Mammary epithelial cell (primary cell): ENCODE measurements at regions of chr11 and their contacts with region 1.

Region 1: DNA sequence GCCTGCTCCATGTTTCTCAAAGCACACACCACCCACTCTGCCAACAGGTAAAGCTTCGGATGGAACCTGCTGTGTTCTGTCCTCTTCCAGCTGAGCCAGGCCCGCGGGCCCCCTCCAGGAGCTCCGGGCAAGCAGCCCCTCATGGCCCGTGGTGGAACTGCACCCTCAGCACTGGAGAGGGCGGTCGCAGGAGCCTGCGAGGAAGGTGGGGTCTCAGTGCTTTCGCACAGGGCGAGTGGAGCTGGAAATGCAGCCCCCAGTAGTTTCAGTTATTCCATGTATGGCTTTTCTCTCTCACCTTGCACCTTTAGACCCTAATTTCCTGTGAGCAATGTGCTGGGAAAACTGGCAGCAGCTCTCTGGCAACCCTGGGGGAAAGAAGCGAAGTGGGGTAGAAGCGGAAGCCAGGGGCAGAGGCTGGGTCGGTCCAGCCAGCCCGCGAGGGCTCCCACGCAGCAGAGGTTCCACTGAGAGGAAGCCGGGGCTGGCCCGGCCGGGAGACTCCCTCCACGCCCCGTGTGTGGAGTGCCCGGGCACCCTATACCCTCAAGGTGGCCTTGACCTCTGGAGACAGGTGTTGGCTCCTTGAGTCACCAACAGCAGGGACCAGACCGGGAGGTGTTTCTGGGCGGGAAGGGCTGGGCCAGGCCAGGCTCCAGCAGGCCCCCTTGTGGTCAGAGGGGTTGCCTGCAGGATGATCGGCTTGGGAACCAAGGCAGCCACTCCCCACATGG is 119.9 kb upstream of the TMEM45B start:
- DNase-seq: peak; percentile 37
- H3K4me3 ChIP-seq: no peak overlapping the region
- H3K27ac ChIP-seq: no peak overlapping the region
- H3K4me1 ChIP-seq: no peaks in the 10 kb centered on the region
- H3K27me3 ChIP-seq: peaks cover 2% of the 10 kb centered on the region
- CTCF ChIP-seq: peak; percentile 55 to 82

Region 2: DNA sequence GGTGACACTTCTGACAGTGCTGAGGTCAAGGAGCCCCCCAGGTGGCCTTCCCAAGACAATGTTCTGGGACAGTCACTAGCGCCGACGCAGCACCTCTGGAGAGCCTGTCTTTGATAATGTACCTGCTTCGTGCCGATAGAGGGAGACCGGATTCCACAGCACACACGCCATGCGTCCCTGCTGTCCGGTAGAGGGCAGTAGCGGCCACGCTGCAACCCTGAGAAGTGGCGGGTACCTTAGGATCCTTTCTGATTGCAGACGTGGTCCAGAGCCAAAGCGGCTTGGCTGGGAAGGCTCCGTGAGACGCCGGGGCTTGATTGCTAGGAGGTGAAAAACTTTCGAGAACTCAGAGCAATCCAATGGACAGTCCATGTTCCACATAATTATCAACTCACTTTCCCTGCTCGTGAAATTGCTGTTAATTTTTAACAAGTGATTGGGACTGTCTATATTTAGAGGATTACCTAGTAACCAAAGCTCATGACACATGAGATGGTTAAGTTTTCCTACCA is 331.5 kb before region 1 on chr11:
- CTCF ChIA-PET with region 1: interaction called, 6 read pairs
- dilution Hi-C with region 1: no loop called
- in situ Hi-C with region 1: no loop called
- intact Hi-C with region 1: loop called (anchors 1 kb)
- DNase-seq: peak; percentile 82
- H3K4me3 ChIP-seq: no peak overlapping the region
- H3K27ac ChIP-seq: no peak overlapping the region
- H3K4me1 ChIP-seq: peaks cover 4% of the 10 kb centered on the region
- H3K27me3 ChIP-seq: peaks cover 21% of the 10 kb centered on the region
- CTCF ChIP-seq: peak; percentile 100

Region 3: DNA sequence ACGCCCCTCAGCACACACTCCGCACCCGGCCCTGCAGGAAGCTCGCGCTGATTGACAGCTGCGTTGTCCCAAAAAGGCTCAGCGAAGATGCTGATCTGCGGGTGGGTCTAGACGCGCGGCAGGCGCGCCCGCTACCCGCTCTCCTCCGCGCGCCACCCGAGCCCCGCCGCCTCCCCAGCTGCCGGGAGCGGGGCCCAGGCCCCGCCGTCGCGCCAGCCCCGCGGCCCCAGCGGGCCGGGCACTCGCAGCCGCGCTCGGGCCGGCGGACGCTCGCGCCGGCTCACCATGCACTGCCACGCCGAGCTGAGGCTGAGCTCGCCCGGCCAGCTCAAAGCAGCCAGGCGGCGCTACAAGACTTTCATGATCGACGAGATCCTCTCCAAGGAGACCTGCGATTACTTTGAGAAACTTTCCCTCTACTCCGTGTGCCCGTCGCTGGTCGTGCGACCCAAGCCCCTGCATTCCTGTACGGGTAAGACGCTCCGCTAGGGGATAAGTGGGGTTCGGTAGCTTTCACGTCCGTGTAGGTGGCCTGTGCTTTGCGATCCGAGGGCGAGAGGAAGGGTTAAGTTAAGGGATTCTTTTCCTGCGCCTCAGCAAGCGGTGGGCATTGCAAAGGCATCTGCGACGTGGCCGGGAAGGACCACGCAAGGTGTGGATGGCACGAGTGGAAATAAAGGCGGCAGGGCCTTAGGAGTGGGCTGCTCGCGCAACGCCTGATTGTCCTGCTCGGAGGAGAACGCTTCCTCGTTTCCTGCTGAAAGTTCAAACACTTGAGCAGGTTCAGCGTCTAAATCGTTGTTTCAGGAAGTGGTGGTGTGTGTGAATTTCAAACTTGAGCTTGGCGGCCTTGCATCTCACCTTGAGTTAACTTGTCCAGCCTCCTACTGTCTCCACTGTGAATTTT is 319.7 kb before region 1 on chr11 and contains the start of gene BARX2:
- CTCF ChIA-PET with region 1: interaction called, 3 read pairs
- dilution Hi-C with region 1: no loop called
- in situ Hi-C with region 1: loop called in 1 of 2 experiments (anchors 5 kb)
- intact Hi-C with region 1: loop called (anchors 1 kb)
- DNase-seq: peak; percentile 64
- H3K4me3 ChIP-seq: peak within 1 kb of the TSS in 2 of 3 experiments; percentile 25 to 41
- H3K27ac ChIP-seq: no peak within 1 kb of the TSS
- H3K4me1 ChIP-seq: peaks cover 18% of the 10 kb centered on the region
- H3K27me3 ChIP-seq: peaks cover 66% of the 10 kb centered on the region
- CTCF ChIP-seq: peak; percentile 37 to 83
- total RNA-seq, gene BARX2: 0.17 TPM in 1 of 2 donors, not detected in the other

Region 4: GRCh38 chr11:129410395-129410960 is 285.3 kb before region 1 on chr11:
- CTCF ChIA-PET with region 1: no interaction called
- dilution Hi-C with region 1: no loop called
- in situ Hi-C with region 1: no loop called
- intact Hi-C with region 1: loop called (anchors 1 kb)
- DNase-seq: peak; percentile 27
- H3K4me3 ChIP-seq: no peak overlapping the region
- H3K27ac ChIP-seq: no peak overlapping the region
- H3K4me1 ChIP-seq: no peaks in the 10 kb centered on the region
- H3K27me3 ChIP-seq: peaks cover 9% of the 10 kb centered on the region
- CTCF ChIP-seq: peak in 1 of 2 donors; percentile 53

Region 5: GRCh38 chr11:129557421-129557820 is 138.3 kb before region 1 on chr11:
- CTCF ChIA-PET with region 1: no interaction called
- dilution Hi-C with region 1: no loop called
- in situ Hi-C with region 1: no loop called
- intact Hi-C with region 1: no loop called
- DNase-seq: no peak
- H3K4me3 ChIP-seq: no peak overlapping the region
- H3K27ac ChIP-seq: no peak overlapping the region
- H3K4me1 ChIP-seq: no peaks in the 10 kb centered on the region
- H3K27me3 ChIP-seq: peaks cover 3% of the 10 kb centered on the region
- CTCF ChIP-seq: no peak

Region 6: DNA sequence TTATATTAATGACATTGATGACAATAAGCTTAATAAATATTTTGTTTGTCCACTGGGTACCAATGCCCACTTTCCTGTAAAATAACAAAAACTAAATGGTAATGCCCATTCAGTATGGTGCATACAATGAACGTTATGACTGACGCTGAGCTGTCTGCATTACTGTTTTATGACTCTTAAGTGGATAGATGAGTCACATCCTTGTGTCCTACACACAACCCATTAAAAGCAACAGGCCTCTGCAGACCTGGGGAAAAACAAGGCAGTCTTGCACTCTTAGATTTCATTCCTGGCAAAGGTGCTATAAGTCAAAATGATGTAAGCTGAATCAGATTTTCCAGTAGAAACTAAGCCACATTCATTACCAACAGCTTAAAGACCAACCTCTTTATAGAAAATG is 56.4 kb before region 1 on chr11:
- CTCF ChIA-PET with region 1: no interaction called
- dilution Hi-C with region 1: no loop called
- in situ Hi-C with region 1: no loop called
- intact Hi-C with region 1: loop called (anchors 2 kb)
- DNase-seq: peak; percentile 99
- H3K4me3 ChIP-seq: no peak overlapping the region
- H3K27ac ChIP-seq: peak overlapping the region; percentile 95
- H3K4me1 ChIP-seq: peaks cover 76% of the 10 kb centered on the region
- H3K27me3 ChIP-seq: no peaks in the 10 kb centered on the region
- CTCF ChIP-seq: no peak

Region 7: DNA sequence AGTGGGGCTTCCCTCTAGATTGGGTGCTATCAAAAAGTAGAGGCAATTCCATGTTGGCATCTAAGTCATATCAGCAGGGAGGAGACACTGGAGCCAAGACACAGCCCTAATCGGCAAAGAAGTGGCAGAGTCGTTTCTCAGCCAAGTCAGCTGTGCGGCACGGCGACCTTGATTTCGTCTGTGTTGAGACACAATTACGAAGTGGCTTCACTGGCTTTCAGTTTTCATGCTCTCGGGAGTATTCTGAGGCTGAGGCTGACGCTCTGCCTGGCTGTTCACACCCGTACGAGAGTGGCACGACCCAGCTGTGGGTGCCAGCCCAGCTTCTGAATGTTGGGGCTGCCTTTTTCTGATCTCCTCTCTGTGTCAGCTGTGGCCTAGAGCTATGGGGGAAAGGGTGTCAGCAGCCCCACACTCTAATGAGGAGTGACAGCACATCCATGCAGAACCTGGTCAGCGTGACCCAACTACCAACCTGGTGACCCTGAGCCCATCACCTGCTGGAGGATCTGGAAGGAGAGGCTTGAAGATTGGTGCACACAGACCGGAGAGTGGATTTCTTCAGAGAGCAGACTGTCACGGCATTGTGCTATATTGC is 14.2 kb after region 1 on chr11:
- CTCF ChIA-PET with region 1: no interaction called
- dilution Hi-C with region 1: no loop called
- in situ Hi-C with region 1: no loop called
- intact Hi-C with region 1: no loop called
- DNase-seq: no peak
- H3K4me3 ChIP-seq: no peak overlapping the region
- H3K27ac ChIP-seq: no peak overlapping the region
- H3K4me1 ChIP-seq: no peaks in the 10 kb centered on the region
- H3K27me3 ChIP-seq: no peaks in the 10 kb centered on the region
- CTCF ChIP-seq: no peak

Region 8: GRCh38 chr11:129803533-129803932 is 107.8 kb after region 1 on chr11:
- CTCF ChIA-PET with region 1: no interaction called
- dilution Hi-C with region 1: no loop called
- in situ Hi-C with region 1: no loop called
- intact Hi-C with region 1: no loop called
- DNase-seq: no peak
- H3K4me3 ChIP-seq: no peak overlapping the region
- H3K27ac ChIP-seq: no peak overlapping the region
- H3K4me1 ChIP-seq: peaks cover 3% of the 10 kb centered on the region
- H3K27me3 ChIP-seq: no peaks in the 10 kb centered on the region
- CTCF ChIP-seq: no peak

Region 9: GRCh38 chr11:130076778-130077481 is 381.2 kb after region 1 on chr11:
- CTCF ChIA-PET with region 1: no interaction called
- dilution Hi-C with region 1: no loop called
- in situ Hi-C with region 1: no loop called
- intact Hi-C with region 1: no loop called
- DNase-seq: no peak
- H3K4me3 ChIP-seq: no peak overlapping the region
- H3K27ac ChIP-seq: no peak overlapping the region
- H3K4me1 ChIP-seq: peaks cover 4% of the 10 kb centered on the region
- H3K27me3 ChIP-seq: no peaks in the 10 kb centered on the region
- CTCF ChIP-seq: no peak